Left cardiac atrium (tissue), 4 donors: ENCODE measurements at regions of chr20 and their contacts with region 1.

Region 1: DNA sequence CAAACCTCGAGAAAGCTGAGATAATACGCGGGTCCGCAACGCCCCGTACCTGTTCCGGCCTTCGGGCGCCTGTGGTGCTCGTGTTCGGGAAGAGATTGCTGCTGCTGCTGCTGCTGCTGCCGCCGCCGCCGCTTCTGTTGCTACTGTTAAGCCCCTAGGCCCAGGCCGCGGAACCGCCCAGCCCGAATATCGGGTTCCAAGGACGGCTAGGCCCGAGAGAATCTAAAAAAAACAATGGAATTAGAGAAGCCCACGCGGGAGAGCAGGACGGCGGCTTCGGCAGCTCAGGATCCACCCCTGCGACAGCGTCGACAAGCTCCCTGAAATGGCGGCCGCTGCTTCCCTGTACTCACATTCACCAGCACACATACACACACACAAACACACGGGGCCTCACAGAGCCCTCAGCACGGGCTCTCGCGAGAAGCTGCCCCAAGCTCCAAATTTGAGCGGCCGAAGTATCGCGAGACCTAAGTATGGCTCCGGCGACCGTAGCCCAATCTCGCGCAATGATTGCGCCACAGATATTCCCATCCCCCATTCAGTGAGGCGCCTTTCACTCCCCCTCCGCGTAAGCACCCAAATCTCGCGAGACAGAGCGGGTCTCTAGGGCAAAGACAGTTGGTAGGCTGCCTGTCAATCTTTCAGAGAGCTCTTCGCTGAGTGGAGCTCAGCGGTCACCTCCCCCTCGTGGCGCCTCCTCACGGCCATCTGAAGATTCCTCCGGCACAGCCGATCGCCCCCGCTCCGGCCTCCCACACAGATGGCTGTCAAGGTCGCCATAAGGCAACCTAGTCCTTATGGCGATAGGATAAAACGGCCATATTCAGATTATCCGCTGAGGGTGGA is at the start of gene RBM39:
- DNase-seq: peak; percentile 100
- ATAC-seq: peak; percentile 94
- total RNA-seq, gene RBM39: 143 to 172 TPM

Region 2: DNA sequence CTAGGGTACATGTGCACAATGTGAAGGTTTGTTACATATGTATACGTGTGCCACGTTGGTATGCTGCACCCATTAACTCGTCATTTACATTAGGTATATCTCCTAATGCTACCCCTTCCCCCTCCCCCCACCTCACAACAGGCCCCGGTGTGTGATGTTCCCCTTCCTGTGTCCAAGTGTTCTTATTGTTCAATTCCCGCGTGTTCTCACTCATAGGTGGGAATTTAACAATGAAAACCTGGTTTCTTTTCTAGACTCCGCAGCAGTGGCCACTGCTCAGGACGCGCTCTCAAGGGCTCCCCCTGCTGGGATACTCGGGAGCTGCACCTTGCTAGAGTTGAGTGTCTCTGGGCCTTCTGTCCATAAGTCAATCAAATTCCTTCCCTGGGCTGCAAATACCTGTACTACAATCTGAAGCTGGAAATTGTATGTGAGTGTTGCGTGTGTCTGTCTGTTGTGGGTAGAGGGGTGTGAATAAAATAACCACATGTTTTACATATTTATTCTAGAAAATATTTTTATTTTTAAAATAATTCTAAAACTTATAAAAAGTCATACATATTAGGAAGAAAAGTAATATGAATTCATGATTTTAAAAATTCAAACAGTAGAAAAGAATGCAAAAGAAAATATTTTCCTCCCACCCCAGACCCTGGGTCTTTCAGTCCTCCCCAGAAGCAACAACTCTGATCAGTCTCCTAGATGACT is 294.9 kb before region 1 on chr20:
- intact Hi-C with region 1: no loop called
- DNase-seq: peak; percentile 83
- ATAC-seq: peak; percentile 91

Region 3: DNA sequence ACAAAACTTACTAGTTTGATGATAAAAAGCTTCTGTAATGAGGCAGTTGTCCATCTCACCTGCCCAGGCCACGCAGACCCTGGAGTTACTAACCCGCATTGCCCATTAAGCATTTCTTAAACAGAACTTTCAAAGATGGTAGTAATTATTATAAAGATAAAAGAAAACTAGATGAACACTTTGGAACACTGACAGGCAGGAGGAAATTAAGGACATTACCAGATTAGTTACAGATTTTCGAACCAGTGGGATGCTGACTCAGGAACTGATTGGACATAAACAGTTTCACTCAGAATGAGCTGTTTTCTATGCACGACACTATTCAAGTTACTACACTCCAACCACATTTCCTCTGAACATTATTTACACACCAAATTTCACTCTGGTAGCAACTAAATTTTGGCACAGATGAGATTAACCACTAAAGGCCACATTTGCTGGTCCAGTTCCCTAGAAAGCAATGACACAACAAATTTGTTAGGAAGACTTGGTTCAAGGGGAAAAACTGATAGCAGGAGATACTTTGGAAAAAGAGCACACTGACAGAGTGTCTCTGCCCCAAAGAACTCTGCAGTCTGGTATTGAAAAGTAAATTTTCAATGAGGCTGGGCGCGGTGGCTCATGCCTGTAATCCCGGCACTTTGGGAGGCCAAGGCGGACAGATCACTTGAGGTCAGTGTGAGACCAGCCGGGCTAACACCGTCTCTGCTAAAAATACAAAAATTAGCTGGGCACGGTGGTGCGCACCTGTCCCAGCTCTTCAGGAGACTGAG is 39.9 kb before region 1 on chr20:
- intact Hi-C with region 1: loop called in 1 of 2 experiments (anchors 5 kb)
- DNase-seq: no peak
- ATAC-seq: no peak

Region 4: GRCh38 chr20:35771689-35772562 is 29.8 kb after region 1 on chr20 and contains the start of gene PHF20:
- intact Hi-C with region 1: loop called in 1 of 2 experiments (anchors 2 kb)
- DNase-seq: peak; percentile 100
- ATAC-seq: peak; percentile 89 to 90
- total RNA-seq, gene PHF20: 45.5 to 50.5 TPM

Region 5: DNA sequence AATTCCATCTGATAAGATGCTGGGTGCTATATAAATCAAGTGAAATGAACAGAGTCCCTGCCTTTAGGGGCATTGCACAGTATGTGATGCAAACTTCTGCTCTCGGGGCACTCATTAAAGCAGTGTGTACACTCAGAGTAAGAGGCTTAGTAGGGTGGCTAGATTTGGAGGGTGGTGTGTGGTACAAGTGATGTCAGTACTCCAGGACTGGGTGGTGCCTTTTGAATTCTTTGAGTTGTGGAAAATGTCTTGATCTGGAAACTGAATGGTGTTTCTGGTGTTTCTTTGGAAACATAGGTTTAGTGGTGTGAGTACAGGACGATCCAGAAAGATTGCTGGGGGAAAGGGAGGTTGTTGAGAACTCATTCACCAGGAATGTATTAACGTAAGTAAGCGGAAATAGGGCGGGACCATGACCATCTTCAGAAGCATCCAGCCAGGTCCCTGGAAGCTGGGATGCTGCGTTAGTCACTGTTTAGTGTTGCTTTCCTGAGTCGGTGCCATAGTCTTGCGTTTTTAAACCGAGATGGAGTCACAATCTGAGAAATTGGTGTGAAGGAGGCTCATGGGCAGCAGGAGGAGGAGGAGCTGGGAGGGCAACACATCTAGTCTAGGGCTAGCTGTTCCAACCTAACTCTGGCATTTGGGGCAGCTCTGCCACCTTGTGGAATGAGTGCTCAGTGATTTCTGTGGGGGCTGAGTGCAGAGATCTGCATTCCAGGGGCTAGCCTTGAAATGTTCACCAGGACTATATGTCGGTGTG is 141.8 kb after region 1 on chr20:
- intact Hi-C with region 1: loop called in 1 of 2 experiments (anchors 10 kb)
- DNase-seq: peak; percentile 79
- ATAC-seq: peak; percentile 84 to 90